ENCODE measurements at regions of chr1 and their contacts with region 1.

Region 1: GRCh38 chr1:91529856-91530255 is 29.2 kb downstream of the CDC7 start:
- DNase-seq: peak in 2 of 4 experiments; percentile 19 to 65
- ATAC-seq: peak; percentile 92
- H3K4me3 ChIP-seq: no peak overlapping the region
- H3K27ac ChIP-seq: no peak overlapping the region
- H3K4me1 ChIP-seq: no peaks in the 10 kb centered on the region
- H3K27me3 ChIP-seq: no peaks in the 10 kb centered on the region
- CTCF ChIP-seq: peak; percentile 56 to 78 (median 63); a peak in 5 of 6 replicates
- EP300 ChIP-seq: no peak
- POLR2A ChIP-seq: no peak
- RAD21 ChIP-seq: peak; percentile 93 to 94

Region 2: GRCh38 chr1:91617285-91617765 is 87.5 kb after region 1 on chr1:
- CTCF ChIA-PET with region 1: no interaction called
- POLR2A ChIA-PET with region 1: no interaction called
- in situ Hi-C with region 1: no loop called
- intact Hi-C with region 1: loop called (anchors 5 kb)
- DNase-seq: peak in 3 of 4 experiments; percentile 38 to 63 (median 46)
- ATAC-seq: peak; percentile 97
- H3K4me3 ChIP-seq: no peak overlapping the region
- H3K27ac ChIP-seq: no peak overlapping the region
- H3K4me1 ChIP-seq: no peaks in the 10 kb centered on the region
- H3K27me3 ChIP-seq: no peaks in the 10 kb centered on the region
- CTCF ChIP-seq: peak; percentile 58 to 98 (median 86)
- EP300 ChIP-seq: no peak
- POLR2A ChIP-seq: no peak
- RAD21 ChIP-seq: peak; percentile 42 to 87

Region 3: DNA sequence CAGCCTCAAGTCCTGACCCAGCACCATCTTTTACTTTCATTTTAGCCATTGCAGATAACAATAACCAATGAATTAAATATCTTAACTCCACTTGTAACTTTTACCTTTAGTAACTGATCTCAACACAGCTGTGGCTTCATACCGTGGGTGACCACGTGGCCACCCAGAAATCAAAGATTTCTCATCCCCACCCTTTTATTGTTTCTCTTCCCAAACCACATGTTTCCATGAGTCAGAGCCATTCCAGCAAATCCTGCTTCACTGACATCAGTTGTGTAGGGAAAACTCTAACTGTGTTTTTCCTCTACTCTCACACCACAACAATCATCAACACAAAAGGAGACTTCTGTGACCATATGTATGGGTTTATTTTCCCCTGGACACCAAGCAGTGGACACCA is 394.3 kb after region 1 on chr1:
- CTCF ChIA-PET with region 1: interaction called, 20 read pairs
- POLR2A ChIA-PET with region 1: no interaction called
- in situ Hi-C with region 1: no loop called
- intact Hi-C with region 1: loop called (anchors 1 kb)
- DNase-seq: no peak
- ATAC-seq: no peak
- H3K4me3 ChIP-seq: no peak overlapping the region
- H3K27ac ChIP-seq: no peak overlapping the region
- H3K4me1 ChIP-seq: no peaks in the 10 kb centered on the region
- H3K27me3 ChIP-seq: no peaks in the 10 kb centered on the region
- CTCF ChIP-seq: no peak
- EP300 ChIP-seq: no peak
- POLR2A ChIP-seq: no peak
- RAD21 ChIP-seq: no peak

Region 4: GRCh38 chr1:91929250-91929649 is 399.4 kb after region 1 on chr1:
- CTCF ChIA-PET with region 1: interaction called, 20 read pairs
- POLR2A ChIA-PET with region 1: no interaction called
- in situ Hi-C with region 1: no loop called
- intact Hi-C with region 1: loop called (anchors 1 kb)
- DNase-seq: no peak
- ATAC-seq: no peak
- H3K4me3 ChIP-seq: no peak overlapping the region
- H3K27ac ChIP-seq: no peak overlapping the region
- H3K4me1 ChIP-seq: no peaks in the 10 kb centered on the region
- H3K27me3 ChIP-seq: no peaks in the 10 kb centered on the region
- CTCF ChIP-seq: no peak
- EP300 ChIP-seq: no peak
- POLR2A ChIP-seq: no peak
- RAD21 ChIP-seq: no peak

Region 5: GRCh38 chr1:92219028-92219427 is 689.2 kb after region 1 on chr1:
- CTCF ChIA-PET with region 1: no interaction called
- POLR2A ChIA-PET with region 1: no interaction called
- in situ Hi-C with region 1: no loop called
- intact Hi-C with region 1: no loop called
- DNase-seq: no peak
- ATAC-seq: no peak
- H3K4me3 ChIP-seq: no peak overlapping the region
- H3K27ac ChIP-seq: no peak overlapping the region
- H3K4me1 ChIP-seq: no peaks in the 10 kb centered on the region
- H3K27me3 ChIP-seq: peaks cover 0 to 5% of the 10 kb centered on the region in 2 experiments; a peak in 1 of 5 replicates
- CTCF ChIP-seq: no peak
- EP300 ChIP-seq: no peak
- POLR2A ChIP-seq: no peak
- RAD21 ChIP-seq: no peak

Region 6: GRCh38 chr1:92298573-92299476 is 769.0 kb after region 1 on chr1 and contains the starts of genes GLMN and RPAP2:
- CTCF ChIA-PET with region 1: no interaction called
- POLR2A ChIA-PET with region 1: no interaction called
- in situ Hi-C with region 1: no loop called
- intact Hi-C with region 1: loop called (anchors 10 kb)
- DNase-seq: peak; percentile 83 to 89 (median 86)
- ATAC-seq: peak; percentile 98
- H3K4me3 ChIP-seq: peak within 1 kb of the TSS; percentile 85
- H3K27ac ChIP-seq: peak within 1 kb of the TSS; percentile 96
- H3K4me1 ChIP-seq: peaks cover 3 to 5% of the 10 kb centered on the region in 2 experiments; a peak in 3 of 5 replicates
- H3K27me3 ChIP-seq: no peaks in the 10 kb centered on the region
- CTCF ChIP-seq: 0 out of 6 replicates have a peak, but pooled peaks of 1 of the 3 experiments have one; percentile 16
- EP300 ChIP-seq: no peak
- POLR2A ChIP-seq: peak; percentile 97
- RAD21 ChIP-seq: peak in 1 of 2 experiments; percentile 12; a peak in 2 of 4 replicates
- polyA plus RNA-seq, gene GLMN: 18.9 to 22.6 TPM
- polyA plus RNA-seq, gene RPAP2: 30.6 to 41.7 TPM

Region 7: DNA sequence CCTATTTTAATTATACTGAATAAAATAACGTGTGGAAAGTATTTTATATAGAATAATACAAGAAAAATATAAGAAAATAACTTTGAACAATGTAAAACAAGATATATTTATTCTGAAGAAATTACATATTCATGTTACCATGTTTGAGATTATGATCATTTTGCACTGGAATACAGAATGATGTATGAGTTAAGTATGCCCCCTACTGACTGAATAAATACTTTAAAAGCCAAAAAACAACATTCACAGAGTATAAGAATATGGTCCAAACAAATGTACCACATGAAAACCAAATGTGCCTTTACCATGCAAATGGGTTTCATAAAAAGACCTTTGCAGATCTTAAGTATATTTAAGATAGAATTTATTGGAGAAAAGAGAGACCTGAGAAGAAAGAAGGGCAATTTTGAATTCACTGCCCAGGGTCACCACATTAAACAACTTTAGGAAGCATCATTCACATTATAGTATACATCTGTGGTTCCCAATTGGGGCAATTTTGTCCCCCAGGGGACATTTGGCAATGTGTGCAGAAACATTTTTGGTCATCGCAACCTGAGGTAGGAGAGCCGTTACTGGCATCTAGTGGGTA is 1093.4 kb after region 1 on chr1:
- CTCF ChIA-PET with region 1: no interaction called
- POLR2A ChIA-PET with region 1: no interaction called
- in situ Hi-C with region 1: loop called (anchors 25 kb)
- intact Hi-C with region 1: no loop called
- DNase-seq: peak in 2 of 4 experiments; percentile 8 to 14
- ATAC-seq: peak; percentile 72
- H3K4me3 ChIP-seq: no peak overlapping the region
- H3K27ac ChIP-seq: no peak overlapping the region
- H3K4me1 ChIP-seq: no peaks in the 10 kb centered on the region
- H3K27me3 ChIP-seq: no peaks in the 10 kb centered on the region
- CTCF ChIP-seq: peak; percentile 18 to 68 (median 27); a peak in 3 of 6 replicates
- EP300 ChIP-seq: no peak
- POLR2A ChIP-seq: no peak
- RAD21 ChIP-seq: peak; percentile 73 to 81